ENCODE measurements at regions of chr9 and their contacts with region 1.

Region 1: GRCh38 chr9:20872340-20872977 is 159.0 kb downstream of the HACD4 start:
- DNase-seq: peak; percentile 93
- ATAC-seq: peak; percentile 94
- H3K4me3 ChIP-seq: no peak overlapping the region
- H3K27ac ChIP-seq: peak overlapping the region; percentile 54; the same call in 1 of the 2 replicates
- H3K4me1 ChIP-seq: peaks cover 2% of the 10 kb centered on the region; the same call in 1 of the 2 replicates
- H3K27me3 ChIP-seq: no peaks in the 10 kb centered on the region
- CTCF ChIP-seq: no peak
- POLR2A ChIP-seq: no peak
- RAD21 ChIP-seq: 0 out of 2 replicates have a peak, but pooled peaks have one; percentile 7

Region 2: DNA sequence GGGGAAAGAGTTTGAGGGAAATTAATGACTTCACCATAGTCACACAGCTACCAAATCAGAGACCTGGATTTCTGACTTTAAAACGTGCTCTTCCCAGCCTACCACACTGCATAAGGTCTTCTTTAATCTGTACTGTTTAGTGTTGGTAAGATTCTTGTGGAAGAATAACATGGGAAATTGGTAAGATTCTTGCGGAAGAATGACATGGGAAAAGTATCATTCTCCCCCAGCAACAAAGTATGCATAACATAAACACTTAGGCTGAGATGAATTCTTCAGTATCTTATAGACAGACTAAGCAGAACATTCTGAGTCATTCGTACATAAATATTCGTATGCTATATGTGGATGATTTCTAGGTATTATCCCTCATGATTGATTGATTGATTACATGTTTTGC is 18.0 kb before region 1 on chr9:
- CTCF ChIA-PET with region 1: no interaction called
- POLR2A ChIA-PET with region 1: no interaction called
- dilution Hi-C with region 1: no loop called
- in situ Hi-C with region 1: no loop called
- intact Hi-C with region 1: loop called (anchors 2 kb)
- DNase-seq: peak; percentile 88
- ATAC-seq: peak; percentile 95
- H3K4me3 ChIP-seq: no peak overlapping the region
- H3K27ac ChIP-seq: no peak overlapping the region
- H3K4me1 ChIP-seq: no peaks in the 10 kb centered on the region; the same call in 1 of the 2 replicates
- H3K27me3 ChIP-seq: no peaks in the 10 kb centered on the region
- CTCF ChIP-seq: no peak
- POLR2A ChIP-seq: no peak
- RAD21 ChIP-seq: no peak

Region 3: GRCh38 chr9:21267485-21268346 is 395.3 kb after region 1 on chr9:
- CTCF ChIA-PET with region 1: interaction called, 10 read pairs
- POLR2A ChIA-PET with region 1: no interaction called
- dilution Hi-C with region 1: no loop called
- in situ Hi-C with region 1: no loop called
- intact Hi-C with region 1: no loop called
- DNase-seq: no peak
- ATAC-seq: no peak
- H3K4me3 ChIP-seq: no peak overlapping the region
- H3K27ac ChIP-seq: no peak overlapping the region
- H3K4me1 ChIP-seq: no peaks in the 10 kb centered on the region
- H3K27me3 ChIP-seq: peaks cover 1% of the 10 kb centered on the region; the same call in 1 of the 2 replicates
- CTCF ChIP-seq: no peak
- POLR2A ChIP-seq: no peak
- RAD21 ChIP-seq: no peak

Measured in IMR-90 (cell line).